ENCODE measurements at regions of chr4 and their contacts with region 1.

Region 1: DNA sequence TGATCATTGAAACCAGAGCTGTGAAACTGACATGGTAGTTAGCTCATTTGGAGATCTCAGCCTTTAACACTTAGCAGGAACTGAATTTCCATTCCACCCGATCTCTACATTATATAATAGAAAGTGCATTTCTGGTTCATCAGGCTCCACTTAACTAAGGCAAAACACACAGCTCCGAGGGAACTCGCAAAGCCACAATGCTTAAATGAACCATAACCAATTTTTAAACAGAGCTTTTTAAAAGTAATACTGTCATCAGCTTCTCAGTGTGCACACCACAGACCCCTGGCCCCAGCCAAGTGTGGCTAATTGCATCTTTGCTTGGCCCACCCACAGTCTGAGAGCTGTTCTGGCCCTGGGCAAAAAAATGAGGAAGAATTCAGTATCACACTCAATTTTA is 66.1 kb downstream of the DCHS2 start:
- DNase-seq: no peak
- H3K4me3 ChIP-seq: no peak overlapping the region
- H3K27ac ChIP-seq: no peak overlapping the region
- H3K4me1 ChIP-seq: peaks cover 0 to 12% (median 0%) of the 10 kb centered on the region in 4 donors
- H3K27me3 ChIP-seq: peaks cover 13% of the 10 kb centered on the region
- CTCF ChIP-seq: no peak
- EP300 ChIP-seq: no peak
- POLR2A ChIP-seq: no peak

Region 2: DNA sequence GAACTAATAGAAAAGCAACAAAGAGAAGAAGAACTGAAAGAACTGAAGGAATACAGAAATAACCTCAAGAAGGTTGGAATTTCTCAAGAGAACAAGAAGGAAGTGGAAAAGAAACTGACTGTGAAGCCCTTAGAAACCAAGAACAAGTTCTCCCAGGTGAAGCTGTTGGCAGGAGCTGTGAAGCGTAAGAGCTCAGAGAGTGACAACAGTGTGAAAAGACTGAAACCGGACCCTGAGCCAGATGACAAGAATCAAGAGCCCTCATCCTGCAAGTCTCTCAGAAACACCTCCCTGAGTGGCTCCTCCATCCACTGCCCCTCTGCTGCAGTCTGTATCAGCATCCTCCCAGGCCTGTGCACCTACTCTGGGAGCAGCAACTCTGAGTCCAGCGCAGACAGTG is 1497.8 kb before region 1 on chr4:
- in situ Hi-C with region 1: no loop called
- intact Hi-C with region 1: no loop called
- DNase-seq: no peak
- H3K4me3 ChIP-seq: no peak overlapping the region
- H3K27ac ChIP-seq: no peak overlapping the region
- H3K4me1 ChIP-seq: no peaks in the 10 kb centered on the region
- H3K27me3 ChIP-seq: no peaks in the 10 kb centered on the region
- CTCF ChIP-seq: no peak
- EP300 ChIP-seq: no peak
- POLR2A ChIP-seq: no peak

Region 3: DNA sequence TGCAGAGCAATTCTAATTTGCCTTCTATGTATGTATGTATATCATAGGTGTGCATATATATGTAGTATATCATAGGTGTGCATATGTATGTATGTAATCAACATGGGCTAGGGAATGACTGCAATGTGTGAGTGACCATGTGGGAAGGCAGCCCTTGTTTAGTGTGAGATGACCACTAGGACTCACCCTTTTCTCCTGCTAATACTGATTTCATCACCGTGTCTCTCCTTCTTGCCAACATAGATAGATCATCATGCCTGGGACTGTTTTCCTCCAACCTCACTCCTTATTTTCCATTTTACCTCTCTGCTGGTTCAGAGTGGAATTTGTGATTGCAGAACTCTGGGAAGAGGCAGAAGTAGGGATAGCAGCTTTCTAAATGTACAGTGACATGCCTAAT is 573.0 kb before region 1 on chr4:
- in situ Hi-C with region 1: no loop called
- intact Hi-C with region 1: no loop called
- DNase-seq: no peak
- H3K4me3 ChIP-seq: no peak overlapping the region
- H3K27ac ChIP-seq: no peak overlapping the region
- H3K4me1 ChIP-seq: no peaks in the 10 kb centered on the region
- H3K27me3 ChIP-seq: no peaks in the 10 kb centered on the region
- CTCF ChIP-seq: no peak
- EP300 ChIP-seq: no peak
- POLR2A ChIP-seq: no peak

Region 4: DNA sequence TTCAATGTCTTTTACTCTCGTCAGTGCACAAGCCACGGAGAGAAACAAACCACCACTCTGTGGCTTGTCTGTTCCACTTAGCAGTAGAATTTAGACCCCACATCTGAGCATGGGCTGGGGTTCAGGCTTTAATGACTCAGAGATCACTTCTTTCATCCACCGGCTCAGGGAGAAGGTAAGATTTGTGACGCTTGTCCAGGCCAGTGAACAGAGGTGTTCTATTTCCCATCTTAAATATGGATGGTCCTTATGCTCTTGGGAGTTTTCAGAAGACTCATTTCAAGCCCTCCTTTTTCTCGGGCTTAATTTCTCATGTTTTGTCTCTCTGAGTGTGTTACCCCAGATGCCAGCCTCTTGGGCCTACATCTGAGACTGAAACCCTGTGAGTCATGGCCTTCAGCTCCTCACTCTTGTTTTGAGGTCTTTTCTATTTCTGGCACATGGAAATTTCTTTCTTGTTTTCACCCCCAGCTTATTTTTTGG is 509.2 kb before region 1 on chr4:
- in situ Hi-C with region 1: no loop called
- intact Hi-C with region 1: no loop called
- DNase-seq: no peak
- H3K4me3 ChIP-seq: no peak overlapping the region
- H3K27ac ChIP-seq: no peak overlapping the region
- H3K4me1 ChIP-seq: no peaks in the 10 kb centered on the region
- H3K27me3 ChIP-seq: no peaks in the 10 kb centered on the region
- CTCF ChIP-seq: no peak
- EP300 ChIP-seq: no peak
- POLR2A ChIP-seq: no peak

Region 5: DNA sequence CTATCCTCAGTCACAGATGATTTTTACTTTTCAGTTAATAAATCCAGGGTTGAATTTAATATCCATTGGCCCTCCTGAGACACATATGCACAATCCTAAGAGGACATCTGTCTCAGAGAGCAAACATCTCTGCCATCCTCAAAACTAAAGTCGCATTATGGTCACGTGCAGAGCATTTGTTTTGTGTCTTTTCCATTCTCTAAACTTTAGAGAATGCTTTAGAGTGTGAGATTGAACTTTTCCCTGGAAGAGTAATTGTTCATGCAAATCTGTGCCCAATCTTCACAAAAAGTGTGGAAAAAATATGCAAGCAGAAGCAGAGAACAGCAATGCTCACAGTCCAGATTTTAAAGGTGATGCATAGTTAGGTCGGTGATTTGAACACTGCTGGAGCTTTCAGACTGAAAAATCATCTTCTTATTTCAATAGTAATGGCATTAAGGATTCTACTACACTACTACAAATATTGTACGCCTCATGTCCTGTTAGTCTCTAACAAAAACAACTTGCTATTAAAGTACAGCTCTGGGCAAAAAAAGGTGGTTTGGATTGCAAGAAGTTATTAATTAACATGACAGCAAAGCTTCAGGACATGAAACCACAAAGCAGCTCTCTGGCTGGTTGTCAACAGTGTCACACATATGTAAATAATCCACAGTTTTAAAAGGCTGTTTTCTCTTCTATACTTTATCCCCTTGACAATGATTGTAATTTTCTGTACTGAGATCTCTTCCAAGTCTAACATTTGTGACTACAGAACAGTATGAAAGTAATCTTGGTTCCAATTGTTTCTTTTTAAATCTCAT is 46.2 kb after region 1 on chr4:
- in situ Hi-C with region 1: no loop called
- intact Hi-C with region 1: loop called (anchors 5 kb)
- DNase-seq: no peak
- H3K4me3 ChIP-seq: no peak overlapping the region
- H3K27ac ChIP-seq: peak overlapping the region in 2 of 4 donors; percentile 10 to 28
- H3K4me1 ChIP-seq: peaks cover 0 to 4% (median 0%) of the 10 kb centered on the region in 4 donors
- H3K27me3 ChIP-seq: no peaks in the 10 kb centered on the region
- CTCF ChIP-seq: no peak
- EP300 ChIP-seq: no peak
- POLR2A ChIP-seq: no peak

Region 6: GRCh38 chr4:155526452-155527169 is 1101.1 kb after region 1 on chr4:
- in situ Hi-C with region 1: no loop called
- intact Hi-C with region 1: no loop called
- DNase-seq: no peak
- H3K4me3 ChIP-seq: no peak overlapping the region
- H3K27ac ChIP-seq: peak overlapping the region; percentile 48 to 76 (median 57)
- H3K4me1 ChIP-seq: peaks cover 0 to 37% (median 7%) of the 10 kb centered on the region in 4 donors
- H3K27me3 ChIP-seq: no peaks in the 10 kb centered on the region
- CTCF ChIP-seq: no peak
- EP300 ChIP-seq: no peak
- POLR2A ChIP-seq: no peak

Measured in transverse colon (tissue), 4 donors.